Panc1 (cell line): ENCODE measurements at regions of chr2 and their contacts with region 1.

Region 1: DNA sequence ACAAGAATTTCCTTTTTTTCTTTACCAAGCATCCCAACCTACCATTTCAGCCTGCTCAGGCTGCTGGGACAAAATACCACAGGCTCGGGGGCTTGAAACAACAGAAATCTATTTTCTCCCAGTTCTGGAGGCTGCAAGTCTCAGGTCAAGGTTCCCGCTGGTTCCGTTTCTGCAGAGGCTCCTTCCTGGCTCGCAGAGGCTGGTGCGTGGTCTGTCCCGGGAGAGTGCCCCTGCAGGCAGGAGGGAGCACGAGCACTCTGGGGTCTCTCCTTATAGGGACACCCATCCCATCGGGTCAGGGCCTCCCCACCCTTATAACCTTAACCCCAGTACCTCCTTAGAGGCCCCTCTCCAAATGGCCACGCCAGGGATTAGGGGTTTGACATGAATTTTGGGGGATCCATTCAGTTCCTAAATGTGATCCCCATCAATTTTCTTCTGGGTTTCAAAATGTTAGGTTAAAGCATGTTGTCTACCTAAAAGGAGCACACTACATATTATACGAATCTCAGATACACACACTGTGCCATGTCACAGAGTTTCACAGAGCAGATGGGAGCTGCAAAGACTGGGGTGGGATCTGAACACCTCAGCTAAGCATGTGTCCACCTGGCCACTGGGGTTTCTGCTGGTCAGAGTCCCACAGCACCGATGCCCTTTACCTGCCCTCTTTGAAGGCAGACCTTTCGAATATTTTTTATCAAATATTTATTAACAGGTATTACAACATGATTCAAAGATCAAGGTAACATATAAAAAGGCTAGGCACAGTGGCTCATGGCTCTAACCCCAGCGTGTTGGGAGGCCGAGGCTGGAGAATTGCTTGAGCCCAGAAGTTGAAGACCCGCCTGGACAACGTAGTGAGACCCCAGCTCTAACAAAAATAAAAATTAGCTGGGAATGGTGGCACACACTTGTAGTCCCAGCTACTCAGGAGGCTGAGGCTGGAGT is 17.6 kb upstream of the ADI1 start:
- DNase-seq: no peak
- ATAC-seq: peak; percentile 82
- H3K4me3 ChIP-seq: peak overlapping the region; percentile 7 to 43
- H3K27ac ChIP-seq: peak overlapping the region; percentile 72
- H3K4me1 ChIP-seq: peaks cover 18% of the 10 kb centered on the region
- H3K27me3 ChIP-seq: no peaks in the 10 kb centered on the region
- CTCF ChIP-seq: peak; percentile 73; the same call in 1 of the 2 replicates

Region 2: GRCh38 chr2:2686222-2686621 is 850.7 kb before region 1 on chr2:
- CTCF ChIA-PET with region 1: no interaction called
- POLR2A ChIA-PET with region 1: interaction called, 11 read pairs
- in situ Hi-C with region 1: no loop called
- intact Hi-C with region 1: no loop called
- DNase-seq: no peak
- ATAC-seq: no peak
- H3K4me3 ChIP-seq: no peak overlapping the region
- H3K27ac ChIP-seq: no peak overlapping the region
- H3K4me1 ChIP-seq: no peaks in the 10 kb centered on the region
- H3K27me3 ChIP-seq: peaks cover 13% of the 10 kb centered on the region
- CTCF ChIP-seq: no peak

Region 3: DNA sequence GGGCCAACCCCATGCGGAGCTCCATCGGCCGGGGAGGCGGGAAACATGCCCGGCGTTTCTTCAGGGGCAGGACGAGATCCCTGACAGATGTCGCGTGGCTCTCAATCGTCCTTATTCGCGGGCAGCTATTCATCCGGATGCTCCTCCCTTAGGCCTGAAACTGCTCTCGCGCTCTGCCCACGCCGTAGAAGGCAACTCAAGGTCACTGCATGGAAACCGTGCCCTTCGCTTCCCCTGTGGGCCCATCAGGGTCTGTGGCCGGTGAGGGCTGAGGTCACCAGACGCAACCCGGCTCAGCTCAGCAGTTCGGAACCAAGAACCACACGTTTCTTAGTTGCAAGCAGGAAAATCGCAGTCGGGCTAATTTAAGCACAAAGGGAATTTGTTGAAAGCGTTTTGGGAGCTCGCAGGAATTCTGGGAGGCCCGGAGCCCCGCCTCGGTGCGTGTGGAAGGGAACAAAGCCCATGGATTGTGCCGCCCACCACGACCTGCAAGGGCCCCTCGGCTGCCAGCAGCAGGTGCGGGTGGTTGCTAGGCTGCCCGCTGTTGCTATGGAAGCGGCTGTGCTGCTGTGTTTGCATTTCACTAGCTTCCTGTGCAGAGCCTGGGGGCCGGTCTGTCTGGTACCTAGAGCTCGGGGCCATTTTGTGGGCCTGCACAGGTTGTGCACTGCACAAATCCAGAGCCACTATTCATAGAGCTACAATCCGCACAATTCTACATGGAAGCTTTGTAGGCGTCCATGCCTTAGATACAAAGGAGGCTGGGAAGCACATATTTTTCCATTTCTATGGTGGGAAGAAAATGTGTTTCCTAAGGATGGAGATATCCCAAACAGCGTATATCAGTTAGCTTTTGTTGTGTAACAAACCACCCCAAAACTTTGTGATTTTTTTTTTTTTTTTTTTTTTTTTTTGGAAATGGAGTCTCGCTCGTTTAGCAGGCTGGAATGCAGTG is 115.0 kb after region 1 on chr2:
- CTCF ChIA-PET with region 1: no interaction called
- POLR2A ChIA-PET with region 1: no interaction called
- in situ Hi-C with region 1: no loop called
- intact Hi-C with region 1: loop called (anchors 2 kb)
- DNase-seq: no peak
- ATAC-seq: no peak
- H3K4me3 ChIP-seq: no peak overlapping the region
- H3K27ac ChIP-seq: no peak overlapping the region
- H3K4me1 ChIP-seq: peaks cover 4% of the 10 kb centered on the region
- H3K27me3 ChIP-seq: no peaks in the 10 kb centered on the region
- CTCF ChIP-seq: no peak